Pancreas (tissue), 10 donors: ENCODE measurements at regions of chr5 and their contacts with region 1.

Region 1: GRCh38 chr5:139690064-139690802 is 42.1 kb downstream of the CXXC5 start:
- DNase-seq: peak in 4 of 6 donors; percentile 60 to 82 (median 68)
- ATAC-seq: peak; percentile 1 to 20 (median 4)
- H3K4me3 ChIP-seq: no peak overlapping the region
- H3K27ac ChIP-seq: peak overlapping the region; percentile 45 to 82 (median 68)
- H3K4me1 ChIP-seq: peaks cover 48 to 59% (median 55%) of the 10 kb centered on the region in 3 donors
- H3K27me3 ChIP-seq: no peaks in the 10 kb centered on the region
- CTCF ChIP-seq: peak in 1 of 4 donors; percentile 27

Region 2: DNA sequence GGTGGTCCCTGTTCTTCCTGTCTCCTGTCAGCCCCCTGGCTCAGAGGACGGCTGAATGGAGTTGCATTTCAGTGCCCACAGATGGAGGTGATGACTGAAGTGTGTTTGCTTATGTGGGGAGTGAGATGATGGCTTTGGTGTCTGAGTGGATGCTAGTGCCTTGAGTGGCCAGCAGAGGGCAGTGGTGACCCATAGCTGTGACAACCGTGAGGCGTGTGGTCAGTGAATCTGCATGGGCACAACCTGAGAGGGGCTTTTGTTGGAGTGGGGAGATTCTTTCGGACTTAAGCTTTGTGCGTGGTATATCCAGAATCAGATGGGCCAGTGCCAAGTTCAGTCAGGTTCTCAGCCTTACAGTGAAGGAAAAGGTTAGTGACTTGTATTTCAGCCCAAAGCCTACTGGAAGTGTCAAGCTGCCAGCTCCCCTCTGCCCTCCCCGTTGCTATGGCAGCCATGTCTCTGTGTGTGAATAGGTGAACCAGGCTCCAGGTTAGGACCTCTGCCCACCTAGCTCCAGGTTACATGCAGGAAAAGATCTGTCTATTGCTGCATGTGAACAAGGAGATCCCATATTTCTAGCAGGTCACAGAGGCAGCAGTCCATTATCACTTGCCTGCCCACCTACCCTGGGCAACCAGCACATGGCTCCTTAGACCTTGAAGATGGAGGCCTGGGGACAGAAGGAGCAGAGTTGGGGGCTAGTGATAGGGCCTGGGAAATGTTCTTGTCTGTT is 56.8 kb before region 1 on chr5:
- intact Hi-C with region 1: loop called in 2 of 3 experiments (anchors 5 to 10 kb)
- DNase-seq: peak; percentile 56 to 81 (median 73)
- ATAC-seq: peak in 3 of 4 donors; percentile 35 to 42 (median 40)
- H3K4me3 ChIP-seq: no peak overlapping the region
- H3K27ac ChIP-seq: no peak overlapping the region
- H3K4me1 ChIP-seq: peaks cover 13 to 17% (median 17%) of the 10 kb centered on the region in 3 donors
- H3K27me3 ChIP-seq: no peaks in the 10 kb centered on the region
- CTCF ChIP-seq: peak; percentile 89 to 93 (median 92)

Region 3: DNA sequence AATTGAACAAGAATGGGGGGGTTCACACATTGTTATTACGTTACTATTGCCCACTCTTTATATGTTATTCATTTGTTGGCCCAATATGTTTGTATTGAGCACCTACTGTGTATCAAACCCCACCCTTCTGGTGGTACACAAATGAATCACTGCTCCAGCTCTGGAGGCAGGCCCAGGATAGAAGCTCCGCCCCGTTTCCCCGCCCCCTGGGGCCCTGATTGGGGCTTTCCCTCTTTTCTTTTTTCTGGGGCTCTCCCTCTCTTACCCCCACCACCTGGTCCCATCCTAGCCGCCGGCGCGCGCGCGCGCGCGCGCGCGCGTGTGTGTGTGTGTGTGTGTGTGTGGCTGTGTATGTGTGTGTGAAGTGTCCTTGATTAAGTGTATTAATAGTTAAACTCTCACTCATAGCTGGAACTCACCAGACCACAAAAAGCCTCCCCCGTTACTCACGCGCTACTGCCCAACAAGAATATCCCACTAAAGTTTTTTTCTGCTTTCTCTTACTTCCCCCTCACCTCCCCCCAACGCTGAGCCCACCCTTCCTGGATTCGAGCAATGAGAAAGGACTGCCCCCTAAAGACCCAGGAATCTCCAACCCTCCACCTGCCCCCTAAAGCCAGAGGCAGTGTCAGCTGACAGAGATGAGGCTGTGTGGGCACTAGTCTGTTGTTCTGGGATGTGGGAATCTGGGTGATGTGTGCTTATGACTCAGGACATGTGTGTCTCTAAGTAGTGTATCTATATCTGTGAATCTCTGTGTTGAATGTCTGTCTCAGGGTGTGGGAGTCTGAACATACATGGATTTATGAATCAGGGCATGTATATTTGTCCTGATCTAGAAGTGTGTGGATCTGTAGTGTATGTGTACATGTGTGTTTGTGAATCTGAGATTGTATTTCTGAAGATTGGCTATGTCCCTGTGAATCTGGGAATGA is 38.1 kb before region 1 on chr5:
- intact Hi-C with region 1: loop called in 2 of 3 experiments (anchors 5 kb)
- DNase-seq: peak; percentile 78 to 87 (median 85)
- ATAC-seq: peak; percentile 24 to 43 (median 34)
- H3K4me3 ChIP-seq: peak overlapping the region in 3 of 4 donors; percentile 98 to 99 (median 98)
- H3K27ac ChIP-seq: peak overlapping the region; percentile 94 to 96 (median 96)
- H3K4me1 ChIP-seq: peaks cover 44 to 59% (median 46%) of the 10 kb centered on the region in 3 donors
- H3K27me3 ChIP-seq: no peaks in the 10 kb centered on the region
- CTCF ChIP-seq: no peak